CD4-positive, alpha-beta T cell (primary cell): ENCODE measurements at regions of chr5 and their contacts with region 1.

Region 1: DNA sequence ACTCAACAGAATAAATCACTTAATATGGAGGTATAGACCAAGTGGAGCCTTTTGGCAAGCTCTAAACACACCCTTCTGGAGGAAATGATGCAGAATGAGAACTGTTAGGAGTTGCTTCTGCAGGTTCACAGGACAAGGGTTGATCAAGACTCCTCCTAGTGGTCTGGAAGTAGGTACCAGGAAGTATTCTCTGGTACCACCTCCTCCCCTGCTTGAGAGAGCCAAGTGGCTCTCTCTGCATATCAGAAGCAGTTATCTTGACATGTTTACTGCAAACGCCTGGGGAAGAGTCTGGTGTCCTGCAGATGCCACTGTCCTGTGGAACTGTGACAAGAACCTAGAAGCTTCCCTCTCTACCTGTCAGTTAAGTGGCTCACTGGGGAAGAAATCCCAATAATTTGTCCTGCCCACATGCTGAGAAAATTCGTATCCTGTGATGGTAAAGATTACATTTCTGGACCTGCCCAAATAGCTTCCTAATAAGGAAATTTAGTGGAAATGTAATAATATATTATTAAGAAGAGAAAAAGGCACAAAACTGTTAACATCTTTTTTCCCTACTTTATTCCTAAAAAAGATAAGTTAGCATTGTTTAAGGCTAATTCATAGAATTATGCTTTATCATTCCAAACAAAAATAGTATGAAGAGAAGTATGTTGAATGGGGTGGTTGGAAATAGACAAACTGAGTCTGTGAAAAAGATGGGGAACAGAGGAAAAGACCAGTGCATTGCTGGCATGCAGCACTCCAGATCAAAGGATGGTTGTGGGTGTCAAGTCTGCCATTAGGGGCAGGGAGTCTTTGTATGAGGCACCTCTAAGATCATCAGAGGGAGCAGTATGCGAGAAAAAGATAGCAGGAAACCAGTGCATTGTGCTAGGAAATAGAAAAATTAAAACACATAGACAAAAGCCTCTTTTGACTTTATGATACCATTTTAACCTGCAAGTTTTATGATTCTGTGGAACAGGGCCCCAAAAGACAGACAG is 118.8 kb downstream of the CDC42SE2 start:
- DNase-seq: peak in 11 of 14 experiments; percentile 16 to 94 (median 52)
- ATAC-seq: peak; percentile 66
- H3K4me3 ChIP-seq: no peak overlapping the region
- H3K4me3 Mint-ChIP-seq: peak overlapping the region; percentile 66
- H3K27ac ChIP-seq: peak overlapping the region; percentile 97 to 99
- H3K27ac Mint-ChIP-seq: peak overlapping the region; percentile 97
- H3K4me1 ChIP-seq: peaks cover 62% of the 10 kb centered on the region
- H3K4me1 Mint-ChIP-seq: peaks cover 94% of the 10 kb centered on the region
- H3K27me3 ChIP-seq: no peaks in the 10 kb centered on the region
- H3K27me3 Mint-ChIP-seq: no peaks in the 10 kb centered on the region
- CTCF ChIP-seq: peak; percentile 68

Region 2: DNA sequence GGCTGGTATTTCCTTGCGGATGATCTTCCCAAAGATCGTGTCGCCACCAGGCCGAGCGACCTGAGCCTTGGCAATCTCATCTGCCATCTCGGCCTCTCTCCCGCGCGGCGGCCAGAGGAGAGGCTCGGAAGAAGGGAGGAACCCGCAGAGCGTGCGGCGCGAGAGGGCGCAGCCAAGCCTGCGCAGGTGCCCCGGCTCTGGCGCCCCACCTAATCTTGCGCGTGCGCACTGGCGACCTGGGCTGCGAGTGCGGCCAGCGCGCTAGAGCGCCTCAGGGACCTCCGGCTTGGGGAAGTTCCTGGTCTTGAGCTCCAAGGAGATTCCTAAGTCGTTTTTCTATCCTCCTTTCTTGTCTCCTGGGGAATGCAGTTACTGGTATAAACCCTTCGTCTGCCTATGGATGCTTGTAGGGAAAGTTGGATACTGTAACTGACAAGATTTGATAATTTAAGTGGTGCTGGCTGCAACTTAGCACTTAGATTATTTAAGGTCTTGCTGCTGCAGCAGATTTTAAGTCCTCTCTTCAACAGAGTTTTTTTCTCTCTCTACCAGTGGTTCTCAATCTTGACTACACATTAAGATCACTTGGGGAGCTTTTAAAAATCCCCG is 217.5 kb before region 1 on chr5 and contains the start of gene HINT1:
- CTCF ChIA-PET with region 1: interaction called, 5 read pairs
- POLR2A ChIA-PET with region 1: interaction called, 10 read pairs
- intact Hi-C with region 1: loop called (anchors 1 to 2 kb)
- DNase-seq: peak; percentile 81 to 97 (median 92)
- ATAC-seq: peak; percentile 84
- H3K4me3 ChIP-seq: peak within 1 kb of the TSS; percentile 86
- H3K4me3 Mint-ChIP-seq: peak within 1 kb of the TSS; percentile 97
- H3K27ac ChIP-seq: peak within 1 kb of the TSS; percentile 92 to 93
- H3K27ac Mint-ChIP-seq: peak within 1 kb of the TSS; percentile 88
- H3K4me1 ChIP-seq: peaks cover 28% of the 10 kb centered on the region
- H3K4me1 Mint-ChIP-seq: peaks cover 63% of the 10 kb centered on the region
- H3K27me3 ChIP-seq: no peaks in the 10 kb centered on the region
- H3K27me3 Mint-ChIP-seq: no peaks in the 10 kb centered on the region
- CTCF ChIP-seq: peak; percentile 37
- total RNA-seq, gene HINT1: 257 to 263 TPM

Region 3: GRCh38 chr5:131252824-131253171 is 129.9 kb before region 1 on chr5:
- CTCF ChIA-PET with region 1: interaction called, 5 read pairs
- POLR2A ChIA-PET with region 1: interaction called, 19 read pairs
- intact Hi-C with region 1: loop called in 1 of 2 experiments (anchors 1 kb)
- DNase-seq: peak; percentile 66 to 95 (median 74)
- ATAC-seq: peak; percentile 80
- H3K4me3 ChIP-seq: peak overlapping the region; percentile 79
- H3K4me3 Mint-ChIP-seq: peak overlapping the region; percentile 93
- H3K27ac ChIP-seq: peak overlapping the region; percentile 76 to 87
- H3K27ac Mint-ChIP-seq: peak overlapping the region; percentile 86
- H3K4me1 ChIP-seq: peaks cover 53% of the 10 kb centered on the region
- H3K4me1 Mint-ChIP-seq: peaks cover 71% of the 10 kb centered on the region
- H3K27me3 ChIP-seq: no peaks in the 10 kb centered on the region
- H3K27me3 Mint-ChIP-seq: no peaks in the 10 kb centered on the region
- CTCF ChIP-seq: no peak

Region 4: DNA sequence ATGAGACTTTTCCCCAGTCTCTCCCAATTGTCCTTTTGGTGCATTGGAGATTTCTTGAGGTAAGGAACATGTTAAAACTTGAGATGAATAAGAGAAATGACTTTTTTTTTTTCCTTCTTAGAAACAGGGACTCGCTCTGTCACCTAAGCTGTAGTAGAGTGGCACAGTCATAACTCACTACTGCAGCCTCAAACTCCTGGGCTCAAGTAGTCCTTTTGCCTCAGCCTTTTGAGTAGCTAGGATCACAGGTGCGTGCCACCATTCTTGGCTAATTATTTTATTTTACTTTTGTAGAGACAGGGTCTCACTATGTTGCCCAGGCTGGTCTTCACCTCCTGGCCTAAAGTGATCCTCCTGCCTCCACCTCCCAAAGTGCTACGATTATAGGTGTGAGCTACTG is 93.0 kb before region 1 on chr5:
- CTCF ChIA-PET with region 1: interaction called, 12 read pairs
- POLR2A ChIA-PET with region 1: interaction called, 10 read pairs
- intact Hi-C with region 1: no loop called
- DNase-seq: peak in 2 of 14 experiments; percentile 26 to 42
- ATAC-seq: peak; percentile 57
- H3K4me3 ChIP-seq: peak overlapping the region; percentile 30
- H3K4me3 Mint-ChIP-seq: peak overlapping the region; percentile 80
- H3K27ac ChIP-seq: peak overlapping the region; percentile 52 to 68
- H3K27ac Mint-ChIP-seq: peak overlapping the region; percentile 92
- H3K4me1 ChIP-seq: peaks cover 71% of the 10 kb centered on the region
- H3K4me1 Mint-ChIP-seq: peaks cover 76% of the 10 kb centered on the region
- H3K27me3 ChIP-seq: no peaks in the 10 kb centered on the region
- H3K27me3 Mint-ChIP-seq: no peaks in the 10 kb centered on the region
- CTCF ChIP-seq: no peak

Region 5: GRCh38 chr5:131357739-131358561 is 24.8 kb before region 1 on chr5:
- CTCF ChIA-PET with region 1: interaction called, 7 read pairs
- POLR2A ChIA-PET with region 1: interaction called, 17 read pairs
- intact Hi-C with region 1: loop called in 1 of 2 experiments (anchors 1 kb)
- DNase-seq: peak in 5 of 14 experiments; percentile 27 to 67 (median 61)
- ATAC-seq: peak; percentile 64
- H3K4me3 ChIP-seq: no peak overlapping the region
- H3K4me3 Mint-ChIP-seq: peak overlapping the region; percentile 70
- H3K27ac ChIP-seq: peak overlapping the region; percentile 5 to 57
- H3K27ac Mint-ChIP-seq: peak overlapping the region; percentile 88
- H3K4me1 ChIP-seq: peaks cover 40% of the 10 kb centered on the region
- H3K4me1 Mint-ChIP-seq: peaks cover 85% of the 10 kb centered on the region
- H3K27me3 ChIP-seq: no peaks in the 10 kb centered on the region
- H3K27me3 Mint-ChIP-seq: no peaks in the 10 kb centered on the region
- CTCF ChIP-seq: no peak

Region 6: GRCh38 chr5:131394128-131394527 is 11.4 kb after region 1 on chr5:
- CTCF ChIA-PET with region 1: interaction called, 10 read pairs
- POLR2A ChIA-PET with region 1: interaction called, 10 read pairs
- intact Hi-C with region 1: loop called in 1 of 2 experiments (anchors 1 kb)
- DNase-seq: peak in 7 of 14 experiments; percentile 32 to 91 (median 54)
- ATAC-seq: peak; percentile 95
- H3K4me3 ChIP-seq: peak overlapping the region; percentile 2
- H3K4me3 Mint-ChIP-seq: peak overlapping the region; percentile 55
- H3K27ac ChIP-seq: peak overlapping the region; percentile 85 to 92
- H3K27ac Mint-ChIP-seq: peak overlapping the region; percentile 97
- H3K4me1 ChIP-seq: peaks cover 54% of the 10 kb centered on the region
- H3K4me1 Mint-ChIP-seq: peaks cover 95% of the 10 kb centered on the region
- H3K27me3 ChIP-seq: no peaks in the 10 kb centered on the region
- H3K27me3 Mint-ChIP-seq: no peaks in the 10 kb centered on the region
- CTCF ChIP-seq: no peak